ENCODE measurements at regions of chr17 and their contacts with region 1.

Region 1: DNA sequence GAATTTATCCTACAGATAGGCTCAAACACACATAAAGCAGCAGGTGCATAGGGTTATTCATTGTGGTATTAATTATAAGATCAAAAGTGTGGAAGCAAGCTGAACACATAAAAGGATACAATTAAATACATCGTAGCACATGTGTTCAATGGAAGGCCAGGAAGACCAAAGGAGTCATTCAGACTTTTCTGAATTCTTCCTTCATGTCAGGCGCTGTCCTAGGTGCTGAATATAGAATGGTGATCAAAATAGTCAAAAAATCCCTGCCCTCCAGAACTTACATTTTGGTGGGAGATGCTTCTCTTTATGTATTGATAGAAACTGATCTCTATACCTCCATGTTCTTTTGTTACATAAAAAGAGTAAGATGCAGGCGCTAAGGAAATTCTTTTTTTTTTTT is 439.0 kb upstream of the ASIC2 start:
- DNase-seq: no peak
- ATAC-seq: no peak
- H3K4me3 ChIP-seq: no peak overlapping the region
- H3K27ac ChIP-seq: no peak overlapping the region
- H3K4me1 ChIP-seq: no peaks in the 10 kb centered on the region
- H3K27me3 ChIP-seq: no peaks in the 10 kb centered on the region
- CTCF ChIP-seq: no peak
- POLR2A ChIP-seq: no peak
- RAD21 ChIP-seq: no peak

Region 2: DNA sequence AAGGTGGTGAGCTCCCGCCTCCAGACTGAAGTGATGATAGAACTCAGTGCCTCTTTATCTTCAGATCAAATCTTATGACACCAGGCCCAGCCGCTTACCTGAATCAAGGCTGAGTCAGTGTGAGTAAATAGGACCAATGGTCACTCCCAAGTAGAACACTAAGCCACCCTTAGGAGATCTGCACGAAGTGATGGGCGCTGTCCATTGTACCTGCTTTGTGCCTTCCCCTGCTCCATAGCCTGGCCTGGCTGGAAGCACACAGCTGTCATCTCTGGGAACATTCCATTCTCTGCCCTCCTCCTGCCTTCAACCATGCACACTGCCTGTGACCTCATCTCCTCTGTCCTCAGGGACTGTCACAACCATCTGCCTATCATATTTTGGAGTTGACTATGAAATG is 159.5 kb before region 1 on chr17:
- CTCF ChIA-PET with region 1: no interaction called
- POLR2A ChIA-PET with region 1: no interaction called
- RAD21 ChIA-PET with region 1: no interaction called
- intact Hi-C with region 1: no loop called
- DNase-seq: no peak
- ATAC-seq: no peak
- H3K4me3 ChIP-seq: no peak overlapping the region
- H3K27ac ChIP-seq: no peak overlapping the region
- H3K4me1 ChIP-seq: no peaks in the 10 kb centered on the region
- H3K27me3 ChIP-seq: no peaks in the 10 kb centered on the region
- CTCF ChIP-seq: no peak
- POLR2A ChIP-seq: no peak
- RAD21 ChIP-seq: no peak

Region 3: DNA sequence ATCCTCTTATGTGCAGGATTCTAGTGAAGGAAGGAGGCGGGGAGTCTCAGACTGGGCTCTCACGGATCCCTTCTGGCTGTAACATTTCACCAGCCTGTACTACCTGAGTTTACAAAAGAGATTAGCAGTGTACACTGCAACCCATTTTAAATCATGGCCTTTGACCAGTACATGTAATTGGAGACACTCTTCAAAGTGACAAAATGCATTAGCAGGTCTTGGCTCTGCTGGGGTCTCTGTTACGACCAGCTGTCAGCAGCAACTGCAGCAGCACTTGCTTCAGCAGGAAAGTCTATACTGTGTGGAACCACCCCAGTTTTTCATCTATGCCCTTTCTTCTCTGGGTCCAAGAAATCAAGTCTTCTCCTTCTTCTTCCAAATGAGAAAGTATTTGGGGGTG is 116.3 kb before region 1 on chr17:
- CTCF ChIA-PET with region 1: no interaction called
- POLR2A ChIA-PET with region 1: no interaction called
- RAD21 ChIA-PET with region 1: no interaction called
- intact Hi-C with region 1: no loop called
- DNase-seq: no peak
- ATAC-seq: no peak
- H3K4me3 ChIP-seq: no peak overlapping the region
- H3K27ac ChIP-seq: no peak overlapping the region
- H3K4me1 ChIP-seq: no peaks in the 10 kb centered on the region
- H3K27me3 ChIP-seq: no peaks in the 10 kb centered on the region
- CTCF ChIP-seq: no peak
- POLR2A ChIP-seq: no peak
- RAD21 ChIP-seq: no peak

Region 4: DNA sequence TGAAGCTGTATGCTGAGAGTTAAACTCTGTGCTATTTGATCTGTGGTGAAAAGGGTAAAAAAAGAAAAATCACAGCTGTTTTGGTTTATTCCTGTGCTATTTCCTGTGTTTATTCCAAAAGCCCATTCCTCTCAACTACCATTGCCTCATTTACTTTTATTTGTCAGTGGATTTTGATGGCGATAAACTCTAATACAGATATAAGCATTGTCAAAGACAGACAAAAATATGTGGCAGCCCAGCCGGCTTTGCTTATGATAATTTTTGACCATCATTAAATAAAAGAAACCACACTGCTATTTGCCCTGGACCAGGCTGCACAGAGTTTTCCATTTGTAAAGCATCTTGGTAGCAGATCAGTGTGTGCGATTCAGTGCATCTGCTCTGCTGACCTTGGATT is 34.6 kb after region 1 on chr17:
- CTCF ChIA-PET with region 1: no interaction called
- POLR2A ChIA-PET with region 1: no interaction called
- RAD21 ChIA-PET with region 1: no interaction called
- intact Hi-C with region 1: loop called (anchors 1 kb)
- DNase-seq: no peak
- ATAC-seq: no peak
- H3K4me3 ChIP-seq: no peak overlapping the region
- H3K27ac ChIP-seq: no peak overlapping the region
- H3K4me1 ChIP-seq: no peaks in the 10 kb centered on the region
- H3K27me3 ChIP-seq: no peaks in the 10 kb centered on the region
- CTCF ChIP-seq: no peak
- POLR2A ChIP-seq: no peak
- RAD21 ChIP-seq: no peak

Measured in HCT116 (cell line).